Heart right ventricle (tissue), 16 donors: ENCODE measurements at regions of chr16 and their contacts with region 1.

Region 1: DNA sequence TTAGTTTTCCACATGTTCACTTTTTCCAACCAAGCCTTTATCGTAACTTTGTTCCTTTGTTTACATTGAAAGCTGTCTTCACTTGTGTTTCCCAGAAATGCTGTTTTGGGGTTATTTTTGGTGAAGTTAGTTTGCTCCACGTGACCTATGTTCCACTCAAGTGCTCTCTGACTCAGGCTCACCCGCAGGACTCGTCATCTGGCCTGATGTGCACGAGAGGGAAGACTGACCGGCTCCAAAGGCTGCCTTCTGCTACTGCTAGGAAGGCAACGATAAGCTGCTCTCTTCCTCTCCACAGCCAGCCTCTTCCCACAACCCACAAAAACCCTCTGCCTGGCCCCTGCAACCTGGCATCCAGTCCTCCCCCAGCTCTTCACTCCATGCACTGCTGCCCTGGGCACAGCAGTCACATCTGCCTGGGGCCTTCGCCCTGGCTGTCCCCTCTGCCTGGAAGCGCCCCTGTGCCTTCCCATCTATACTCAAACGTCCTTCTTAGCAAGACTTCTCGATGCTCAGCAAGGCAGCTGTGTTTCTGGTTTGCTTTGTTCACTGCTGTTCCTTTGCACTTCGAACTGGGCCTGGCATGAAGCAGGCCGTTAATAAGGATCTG is 28.0 kb downstream of the ZCCHC14 start:
- DNase-seq: peak; percentile 60 to 81
- ATAC-seq: peak; percentile 75 to 90 (median 88)
- H3K4me3 ChIP-seq: peak overlapping the region in 7 of 10 donors; percentile 3 to 33 (median 16)
- H3K27ac ChIP-seq: peak overlapping the region; percentile 64 to 94 (median 90)
- H3K4me1 ChIP-seq: peaks cover 31 to 88% (median 73%) of the 10 kb centered on the region in 9 donors
- H3K27me3 ChIP-seq: no peaks in the 10 kb centered on the region
- CTCF ChIP-seq: no peak

Region 2: DNA sequence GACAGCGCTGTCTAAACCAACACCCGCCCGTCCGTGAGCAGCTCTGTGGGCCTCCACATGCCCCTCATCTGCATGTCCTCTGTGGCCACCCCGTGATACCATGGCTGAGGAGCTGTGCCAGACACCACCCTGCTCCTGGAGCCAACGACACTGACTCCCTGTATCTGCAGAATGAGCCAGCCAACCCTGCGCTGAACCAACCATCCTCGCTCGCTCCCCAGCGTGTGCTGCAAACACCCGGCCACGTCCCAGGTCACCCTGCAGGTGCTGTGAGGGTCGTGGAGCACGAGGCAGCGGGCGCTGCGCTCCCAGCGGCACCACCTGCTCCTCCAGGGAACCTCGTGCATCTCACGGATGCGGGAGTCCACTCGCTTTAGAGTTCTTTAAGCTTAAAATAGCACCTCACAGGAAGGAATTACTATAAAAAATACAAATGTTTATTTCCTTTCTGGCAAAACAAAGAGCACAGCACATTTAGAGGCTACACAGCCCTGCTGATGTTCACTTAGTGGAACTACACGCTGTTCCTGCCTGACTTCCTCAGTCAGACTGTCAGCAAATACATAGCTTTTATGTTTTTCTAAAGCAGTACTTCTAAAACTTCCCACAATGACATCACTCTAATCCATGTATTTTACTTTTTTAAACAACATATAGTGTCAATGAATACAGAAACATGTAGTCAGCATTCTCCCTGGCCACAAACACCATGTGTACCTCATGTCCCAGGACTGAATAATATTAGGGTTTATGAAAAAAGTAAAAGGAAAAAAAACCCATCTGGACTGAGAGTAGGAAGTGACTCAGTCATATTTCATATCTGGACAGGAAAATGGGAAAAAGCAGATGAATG is 29.2 kb before region 1 on chr16:
- intact Hi-C with region 1: loop called in 1 of 10 experiments (anchors 2 kb)
- DNase-seq: peak in 1 of 2 donors; percentile 12
- ATAC-seq: peak; percentile 50 to 89 (median 81)
- H3K4me3 ChIP-seq: peak overlapping the region in 8 of 10 donors; percentile 12 to 34 (median 24)
- H3K27ac ChIP-seq: peak overlapping the region; percentile 37 to 79 (median 69)
- H3K4me1 ChIP-seq: peaks cover 16 to 64% (median 35%) of the 10 kb centered on the region in 9 donors
- H3K27me3 ChIP-seq: no peaks in the 10 kb centered on the region
- CTCF ChIP-seq: no peak

Region 3: DNA sequence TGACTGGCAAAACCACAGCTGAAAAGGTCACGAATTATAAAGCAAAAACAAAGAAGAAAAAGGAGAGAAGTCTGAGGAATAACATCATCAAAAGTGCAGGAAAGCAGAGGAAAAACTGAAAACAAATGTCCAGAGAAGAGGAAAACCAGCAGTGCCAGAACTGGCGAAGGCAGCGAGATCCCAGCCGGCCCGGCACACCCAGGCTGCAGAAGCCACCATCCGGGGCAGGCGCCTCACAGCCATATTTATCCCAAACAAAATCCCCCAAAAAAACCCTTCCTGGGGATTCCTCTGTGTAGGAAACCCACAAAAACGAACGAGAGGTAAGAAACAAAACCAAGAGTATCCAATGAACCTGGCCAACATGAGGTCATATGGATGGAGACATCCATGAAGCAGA is 17.5 kb after region 1 on chr16:
- intact Hi-C with region 1: no loop called
- DNase-seq: no peak
- ATAC-seq: no peak
- H3K4me3 ChIP-seq: no peak overlapping the region
- H3K27ac ChIP-seq: peak overlapping the region in 1 of 10 donors; percentile 11
- H3K4me1 ChIP-seq: peaks cover 7 to 78% (median 44%) of the 10 kb centered on the region in 9 donors
- H3K27me3 ChIP-seq: no peaks in the 10 kb centered on the region
- CTCF ChIP-seq: no peak

Region 4: GRCh38 chr16:87492721-87493607 is 28.2 kb after region 1 on chr16 and contains the start of gene ZCCHC14:
- intact Hi-C with region 1: loop called in 2 of 10 experiments (anchors 2 to 5 kb)
- DNase-seq: peak; percentile 100
- ATAC-seq: peak; percentile 98 to 100 (median 99)
- H3K4me3 ChIP-seq: peak within 1 kb of the TSS; percentile 47 to 65 (median 58)
- H3K27ac ChIP-seq: peak within 1 kb of the TSS in 9 of 10 donors; percentile 6 to 87 (median 68)
- H3K4me1 ChIP-seq: peaks cover 11 to 54% (median 45%) of the 10 kb centered on the region in 9 donors
- H3K27me3 ChIP-seq: no peaks in the 10 kb centered on the region
- CTCF ChIP-seq: no peak
- total RNA-seq, gene ZCCHC14: 10.6 to 19.3 (median 16.1) TPM